ENCODE measurements at regions of chr19 and their contacts with region 1.

Region 1: DNA sequence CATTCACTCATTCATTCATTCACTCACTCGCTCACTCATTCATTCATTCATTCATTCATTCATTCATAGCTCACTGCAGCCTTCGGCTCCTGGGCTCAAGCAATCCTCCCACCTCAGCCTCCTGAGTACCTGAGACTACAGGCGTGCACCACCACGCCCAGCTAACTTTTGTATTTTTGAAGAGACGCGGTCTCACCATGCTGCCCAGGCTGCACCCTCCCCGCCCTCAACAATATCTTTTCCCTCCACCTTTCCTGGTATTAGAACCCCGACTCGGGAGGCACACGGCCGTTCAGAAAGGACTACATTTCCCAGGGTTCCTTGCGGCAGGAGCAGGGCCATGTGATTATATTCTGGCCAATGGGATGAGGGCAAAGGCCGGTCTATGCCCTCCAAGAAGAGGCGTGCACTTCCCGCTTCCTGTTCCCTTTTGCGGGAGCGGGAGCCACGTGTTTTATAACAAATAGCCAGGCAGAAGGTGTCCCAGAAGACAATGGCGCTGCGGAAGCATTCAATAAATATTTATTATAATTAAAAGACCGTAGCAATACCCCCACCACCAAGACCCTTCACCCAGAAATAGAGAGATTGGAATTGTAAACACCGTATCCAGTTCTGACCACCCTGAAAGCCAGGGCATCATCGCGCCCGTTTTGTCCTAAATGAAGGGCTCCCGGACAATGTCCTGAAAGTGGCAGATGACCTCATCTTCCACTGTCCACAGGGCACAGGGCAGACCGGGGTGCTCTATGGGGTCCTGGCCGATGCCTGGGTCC is 15.9 kb downstream of the TICAM1 start:
- DNase-seq: peak; percentile 88
- H3K4me3 Mint-ChIP-seq: peak overlapping the region; percentile 67
- H3K27ac Mint-ChIP-seq: peak overlapping the region; percentile 66
- H3K4me1 Mint-ChIP-seq: peaks cover 16% of the 10 kb centered on the region
- H3K27me3 Mint-ChIP-seq: no peaks in the 10 kb centered on the region

Region 2: DNA sequence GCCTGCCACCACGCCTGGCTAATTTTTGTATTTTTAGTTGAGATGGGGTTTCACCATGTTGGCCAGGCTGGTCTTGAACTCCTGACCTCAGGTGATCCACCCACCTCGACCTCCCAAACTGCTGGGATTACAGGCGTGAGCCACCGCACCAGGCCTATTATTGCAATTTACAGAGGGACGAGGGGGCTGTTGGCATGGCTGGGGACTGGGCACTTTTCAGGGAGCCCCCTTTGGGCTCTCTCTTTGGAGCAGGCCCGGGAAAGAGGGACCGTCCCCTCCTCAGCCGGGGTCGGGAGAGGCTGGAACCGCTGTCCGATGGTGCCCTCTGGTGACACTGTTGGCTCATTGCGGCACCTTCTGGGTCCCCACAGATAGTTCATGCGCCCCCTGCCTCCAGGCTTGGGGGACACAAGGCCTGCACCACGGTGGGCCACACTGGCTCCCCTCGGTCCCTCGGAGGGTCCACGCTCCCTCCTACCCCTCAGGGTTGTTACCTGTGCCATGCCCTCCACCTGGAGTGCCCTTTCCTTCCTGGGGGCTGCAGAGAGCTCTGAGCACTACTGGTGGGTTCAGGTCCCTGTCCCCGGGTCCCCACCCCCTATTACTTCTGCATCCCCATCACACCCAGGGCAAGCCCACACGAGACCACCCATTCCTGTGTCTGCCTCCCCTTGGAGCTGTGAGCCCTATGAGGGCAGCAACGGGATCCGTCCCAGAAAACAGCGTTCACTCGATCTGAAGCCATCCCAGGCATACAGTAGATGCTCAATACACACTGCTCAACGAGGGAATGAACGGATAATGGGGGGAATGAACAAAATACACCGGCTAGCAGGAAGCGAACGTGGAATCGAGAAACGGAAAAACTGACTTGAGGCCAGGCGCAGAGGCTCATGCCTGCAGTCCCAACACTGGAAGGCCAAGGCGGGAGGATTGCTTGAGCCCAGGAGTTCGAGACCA is 11.6 kb before region 1 on chr19:
- CTCF ChIA-PET with region 1: interaction called, 15 read pairs
- intact Hi-C with region 1: no loop called
- DNase-seq: peak; percentile 72
- H3K4me3 Mint-ChIP-seq: peak overlapping the region; percentile 24
- H3K27ac Mint-ChIP-seq: no peak overlapping the region
- H3K4me1 Mint-ChIP-seq: peaks cover 2% of the 10 kb centered on the region
- H3K27me3 Mint-ChIP-seq: no peaks in the 10 kb centered on the region

Region 3: GRCh38 chr19:4831304-4831978 is 15.8 kb after region 1 on chr19 and contains the start of gene TICAM1:
- CTCF ChIA-PET with region 1: interaction called, 58 read pairs
- intact Hi-C with region 1: loop called (anchors 2 kb)
- DNase-seq: peak; percentile 86
- H3K4me3 Mint-ChIP-seq: peak within 1 kb of the TSS; percentile 86
- H3K27ac Mint-ChIP-seq: peak within 1 kb of the TSS; percentile 85
- H3K4me1 Mint-ChIP-seq: peaks cover 20% of the 10 kb centered on the region
- H3K27me3 Mint-ChIP-seq: no peaks in the 10 kb centered on the region
- total RNA-seq, gene TICAM1: 15.2 to 16.5 TPM

Region 4: DNA sequence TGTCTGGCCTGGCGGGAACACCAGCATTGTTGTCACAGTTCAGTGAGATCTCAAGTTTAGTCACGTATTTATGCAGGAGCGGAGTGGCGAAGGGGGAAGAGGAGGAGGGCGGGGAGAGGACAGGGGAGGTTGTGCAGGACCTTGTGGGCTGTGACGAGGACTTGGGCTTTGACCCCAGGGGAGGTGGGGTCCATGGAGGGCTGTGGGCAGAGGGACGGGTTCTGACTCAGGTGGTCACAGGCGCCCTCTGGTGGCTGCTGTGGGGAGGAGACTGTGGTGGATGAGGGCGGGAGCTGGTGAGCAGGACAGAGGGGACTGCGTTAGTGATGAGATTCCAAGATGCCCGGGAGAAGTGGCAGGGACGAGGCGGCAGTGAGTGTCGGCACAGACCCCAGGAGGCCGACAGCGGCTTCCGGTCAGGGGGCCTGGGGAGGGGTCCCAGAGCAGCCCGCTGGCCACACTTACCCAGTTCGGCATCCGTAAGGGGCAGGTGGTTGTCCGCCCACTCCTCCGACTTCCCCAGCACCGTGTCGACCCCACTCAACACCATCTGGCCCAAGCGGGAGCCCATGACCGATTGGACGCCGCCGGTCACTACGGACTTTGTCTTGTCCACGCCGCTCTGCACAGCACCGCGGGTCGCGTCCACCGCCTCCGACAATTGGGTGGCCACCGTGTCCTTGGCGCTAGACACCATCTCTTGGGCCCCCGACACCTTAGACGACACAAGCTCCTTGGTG is 36.1 kb after region 1 on chr19:
- CTCF ChIA-PET with region 1: interaction called, 294 read pairs
- intact Hi-C with region 1: no loop called
- DNase-seq: peak; percentile 84
- H3K4me3 Mint-ChIP-seq: no peak overlapping the region
- H3K27ac Mint-ChIP-seq: no peak overlapping the region
- H3K4me1 Mint-ChIP-seq: no peaks in the 10 kb centered on the region
- H3K27me3 Mint-ChIP-seq: no peaks in the 10 kb centered on the region

Region 5: GRCh38 chr19:4909897-4910593 is 94.4 kb after region 1 on chr19:
- CTCF ChIA-PET with region 1: interaction called, 36 read pairs
- intact Hi-C with region 1: loop called (anchors 2 kb)
- DNase-seq: peak; percentile 97
- H3K4me3 Mint-ChIP-seq: peak overlapping the region; percentile 85
- H3K27ac Mint-ChIP-seq: peak overlapping the region; percentile 86
- H3K4me1 Mint-ChIP-seq: peaks cover 53% of the 10 kb centered on the region
- H3K27me3 Mint-ChIP-seq: no peaks in the 10 kb centered on the region

Region 6: GRCh38 chr19:5031231-5032100 is 215.9 kb after region 1 on chr19:
- CTCF ChIA-PET with region 1: interaction called, 46 read pairs
- intact Hi-C with region 1: no loop called
- DNase-seq: peak; percentile 89
- H3K4me3 Mint-ChIP-seq: no peak overlapping the region
- H3K27ac Mint-ChIP-seq: no peak overlapping the region
- H3K4me1 Mint-ChIP-seq: peaks cover 2% of the 10 kb centered on the region
- H3K27me3 Mint-ChIP-seq: no peaks in the 10 kb centered on the region

Region 7: GRCh38 chr19:5131031-5131505 is 315.5 kb after region 1 on chr19:
- CTCF ChIA-PET with region 1: no interaction called
- intact Hi-C with region 1: loop called (anchors 5 kb)
- DNase-seq: no peak
- H3K4me3 Mint-ChIP-seq: peak overlapping the region; percentile 49
- H3K27ac Mint-ChIP-seq: peak overlapping the region; percentile 83
- H3K4me1 Mint-ChIP-seq: peaks cover 22% of the 10 kb centered on the region
- H3K27me3 Mint-ChIP-seq: no peaks in the 10 kb centered on the region